HAP-1 (cell line): ENCODE measurements at regions of chr20 and their contacts with region 1.

Region 1: DNA sequence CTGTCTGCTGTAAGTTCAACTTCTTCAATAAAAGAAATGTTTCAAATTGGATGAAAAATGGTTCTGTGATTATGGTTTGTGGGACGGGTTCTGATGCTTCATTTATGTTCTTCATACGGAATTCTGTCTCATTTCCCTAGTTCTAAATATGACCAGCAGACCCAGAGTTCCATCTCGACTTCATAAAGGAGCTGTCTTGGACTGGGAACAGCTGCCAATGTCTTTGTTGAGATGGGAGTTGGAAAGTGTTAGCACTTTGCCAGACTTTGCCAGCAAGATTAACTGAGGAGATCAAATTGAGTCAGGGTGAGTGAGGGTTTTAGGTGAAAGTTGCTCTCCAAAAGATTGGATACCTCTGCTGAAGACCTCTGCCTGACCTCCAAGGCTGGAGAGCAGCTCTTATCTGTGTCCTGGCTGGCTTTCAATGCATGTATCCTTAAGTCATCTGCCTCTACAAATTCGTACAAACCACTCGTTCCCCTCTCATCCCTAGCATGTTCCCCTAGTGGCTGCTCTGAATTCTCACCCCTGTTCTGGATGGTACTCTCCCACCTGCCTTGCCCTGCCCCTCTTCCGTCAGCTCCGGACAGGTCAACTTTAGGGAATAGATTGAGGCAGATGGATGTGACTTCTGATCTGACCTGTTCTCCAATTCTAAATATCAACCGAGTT is at the start of gene EFCAB8:
- DNase-seq: no peak
- H3K4me3 ChIP-seq: no peak within 1 kb of the TSS
- H3K4me1 ChIP-seq: peaks cover 10% of the 10 kb centered on the region
- H3K27me3 ChIP-seq: no peaks in the 10 kb centered on the region

Region 2: GRCh38 chr20:32652739-32653526 is 205.9 kb before region 1 on chr20:
- in situ Hi-C with region 1: no loop called
- DNase-seq: peak; percentile 61 to 91
- H3K4me3 ChIP-seq: no peak overlapping the region
- H3K4me1 ChIP-seq: no peaks in the 10 kb centered on the region
- H3K27me3 ChIP-seq: no peaks in the 10 kb centered on the region

Region 3: DNA sequence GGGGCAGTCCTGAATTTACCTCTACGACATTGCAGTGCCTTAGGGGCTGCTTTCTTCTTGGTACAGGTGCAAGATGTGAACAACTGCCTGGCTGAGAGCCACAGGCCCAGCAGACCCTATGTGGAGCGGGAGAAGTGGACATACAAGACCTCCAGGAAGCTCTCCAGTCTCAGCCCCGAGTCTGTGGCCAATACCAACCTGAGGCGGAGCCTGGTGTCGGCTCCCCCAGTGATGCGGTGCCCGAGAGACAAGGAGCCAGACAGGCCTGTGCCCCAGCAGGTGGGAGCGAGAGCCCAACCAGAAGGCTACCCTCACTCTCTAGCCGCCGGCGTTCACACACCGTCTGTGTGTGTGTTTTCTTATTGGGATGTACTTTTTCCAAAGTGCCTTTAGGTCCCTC is 59.5 kb after region 1 on chr20:
- in situ Hi-C with region 1: loop called (anchors 10 kb)
- DNase-seq: no peak
- H3K4me3 ChIP-seq: no peak overlapping the region
- H3K4me1 ChIP-seq: no peaks in the 10 kb centered on the region
- H3K27me3 ChIP-seq: no peaks in the 10 kb centered on the region